ENCODE measurements at regions of chr22 and their contacts with region 1.

Region 1: DNA sequence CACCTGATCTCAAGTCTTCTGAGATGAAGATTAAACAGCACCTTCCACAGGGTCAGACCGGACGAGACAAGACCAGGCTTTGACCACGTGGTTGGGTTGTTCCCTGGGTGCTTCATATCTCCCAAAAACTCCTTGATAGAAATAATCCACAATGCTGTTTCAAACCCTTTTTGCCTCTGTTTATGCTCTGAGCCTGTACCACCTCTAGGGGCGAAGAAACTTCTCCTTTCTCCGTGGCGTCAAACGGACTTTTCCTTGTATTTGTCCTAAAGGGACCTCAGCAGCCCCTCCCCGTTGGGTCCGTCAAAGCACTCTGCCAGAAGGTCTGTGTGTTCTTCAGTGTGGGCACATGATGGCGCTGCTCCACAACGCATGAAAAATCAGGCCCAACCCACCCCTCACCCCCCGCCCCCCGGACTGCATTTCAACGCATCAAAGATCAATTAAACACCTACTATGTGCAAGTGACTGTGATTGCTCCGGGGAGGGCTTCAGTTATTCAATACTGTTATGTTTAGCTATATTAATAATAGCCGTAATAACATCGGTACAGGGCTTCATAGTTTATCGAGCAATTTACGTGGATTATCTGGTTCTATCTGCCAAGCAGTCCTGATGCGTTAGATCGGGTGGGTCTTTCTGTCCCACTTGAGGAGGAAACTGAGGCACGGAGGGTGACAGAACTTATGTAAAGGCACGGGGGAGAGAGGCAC is 17.3 kb upstream of the EIF3D start:
- DNase-seq: peak in 6 of 10 donors; percentile 43 to 61 (median 58)
- H3K4me3 ChIP-seq: peak overlapping the region in 37 of 59 donors; percentile 2 to 51 (median 31)
- H3K27ac ChIP-seq: no peak overlapping the region
- H3K27me3 ChIP-seq: peaks cover 0 to 7% (median 0%) of the 10 kb centered on the region in 45 donors
- CTCF ChIP-seq: peak in 54 of 56 donors; percentile 46 to 83 (median 70)

Region 2: DNA sequence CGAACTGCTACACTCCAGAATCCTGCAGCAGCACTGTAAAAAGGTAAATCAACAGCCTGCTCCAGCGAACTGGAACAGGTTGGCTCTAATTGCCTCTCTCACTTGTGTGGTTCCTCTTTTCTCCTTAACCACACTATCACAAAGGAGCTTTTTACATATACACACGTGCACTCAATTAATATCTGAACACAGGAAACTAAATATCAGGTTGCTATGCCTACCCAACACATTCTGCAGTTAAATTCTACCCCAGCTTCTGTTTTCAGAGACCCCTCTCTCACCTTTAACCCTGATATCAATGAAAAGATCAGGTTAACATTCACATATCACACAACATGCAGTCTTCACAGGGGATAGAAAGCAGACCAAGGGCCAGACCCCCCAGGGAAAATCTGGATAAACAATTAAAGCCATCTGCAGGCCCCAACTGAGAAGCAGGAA is 528.6 kb before region 1 on chr22:
- intact Hi-C with region 1: no loop called
- DNase-seq: no peak
- H3K4me3 ChIP-seq: no peak overlapping the region
- H3K27ac ChIP-seq: no peak overlapping the region
- H3K27me3 ChIP-seq: no peaks in the 10 kb centered on the region
- CTCF ChIP-seq: no peak

Region 3: DNA sequence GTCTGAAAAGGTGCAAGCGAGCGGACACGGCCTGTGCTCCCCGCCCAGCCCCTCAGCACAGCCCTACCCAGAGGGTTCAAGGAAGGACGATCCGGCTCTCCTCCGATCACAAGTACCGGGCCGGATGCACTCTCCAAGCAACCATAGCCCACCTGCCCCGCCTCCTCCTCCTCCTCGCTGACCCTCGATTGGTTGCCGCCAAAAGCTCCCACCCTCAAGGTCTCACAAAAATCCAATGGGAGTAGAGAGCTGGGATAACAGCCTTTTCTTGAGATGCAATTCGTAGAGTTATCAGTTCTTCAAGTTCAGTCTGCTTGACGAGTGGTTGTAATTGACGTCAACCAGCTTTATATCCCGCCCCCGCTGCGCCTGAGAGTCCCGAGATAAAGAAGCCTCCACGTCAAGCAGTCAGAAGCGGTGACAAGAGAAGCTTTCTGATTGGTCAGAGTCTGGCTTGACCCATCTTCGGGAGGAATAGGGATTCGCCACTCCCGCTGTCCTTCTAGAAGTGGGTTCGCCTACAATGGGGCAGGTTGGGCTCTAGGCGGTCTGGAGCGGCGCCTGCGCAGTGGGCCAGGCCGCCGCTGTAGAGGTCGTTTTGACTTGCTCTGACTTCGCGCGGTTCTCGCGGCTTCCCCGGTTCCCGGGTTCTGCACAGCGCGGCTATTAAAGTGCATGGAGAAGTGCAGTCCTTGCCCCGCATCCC is 229.9 kb after region 1 on chr22 and contains the start of gene IFT27:
- intact Hi-C with region 1: loop called (anchors 5 kb)
- DNase-seq: peak; percentile 94 to 100 (median 100)
- H3K4me3 ChIP-seq: peak within 1 kb of the TSS; percentile 59 to 100 (median 94)
- H3K27ac ChIP-seq: peak within 1 kb of the TSS; percentile 7 to 97 (median 89)
- H3K27me3 ChIP-seq: no peaks in the 10 kb centered on the region
- CTCF ChIP-seq: peak in 21 of 56 donors; percentile 7 to 57 (median 32)
- total RNA-seq, gene IFT27: 29.3 to 64.1 (median 43.9) TPM

Region 4: DNA sequence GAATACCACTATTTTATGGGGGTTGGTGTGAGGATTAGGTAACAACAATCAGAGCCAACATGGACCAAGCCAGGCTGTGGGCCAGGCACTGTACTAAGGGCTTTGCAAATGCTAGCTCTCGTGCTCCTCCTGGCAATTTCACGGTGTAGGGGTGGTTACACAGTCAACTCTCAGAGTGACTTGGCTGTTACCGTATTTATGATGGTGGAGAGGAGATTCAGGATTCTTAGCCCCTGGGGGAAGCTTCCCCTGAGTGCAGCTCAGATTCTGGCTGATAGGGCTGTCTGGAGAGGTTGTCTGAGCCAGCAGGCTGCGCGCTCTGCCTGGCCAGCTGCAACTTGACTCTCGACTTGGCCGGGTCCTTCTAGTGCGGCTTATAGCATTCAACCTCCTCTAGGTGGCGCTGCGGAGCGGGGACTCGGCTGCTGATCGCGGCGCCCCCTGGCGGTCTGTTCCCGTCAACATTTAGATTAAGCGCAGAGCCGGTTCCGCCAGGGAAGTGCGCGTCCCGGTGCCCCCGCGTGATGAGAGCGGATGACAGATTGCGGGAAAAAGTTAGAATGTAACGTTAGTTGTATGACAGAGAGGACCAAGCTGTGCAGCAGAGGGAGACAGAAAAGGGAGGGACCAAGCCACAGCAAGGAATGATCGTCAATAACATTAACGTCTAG is 310.0 kb after region 1 on chr22:
- intact Hi-C with region 1: loop called (anchors 5 kb)
- DNase-seq: peak; percentile 82 to 93 (median 89)
- H3K4me3 ChIP-seq: peak overlapping the region in 6 of 59 donors; percentile 2 to 30 (median 22)
- H3K27ac ChIP-seq: no peak overlapping the region
- H3K27me3 ChIP-seq: peaks cover 0 to 5% (median 0%) of the 10 kb centered on the region in 45 donors
- CTCF ChIP-seq: peak; percentile 98 to 100 (median 100)

Region 5: GRCh38 chr22:37051391-37052385 is 505.4 kb after region 1 on chr22 and contains the start of gene KCTD17:
- intact Hi-C with region 1: loop called in 1 of 2 experiments (anchors 10 kb)
- DNase-seq: peak; percentile 45 to 88 (median 72)
- H3K4me3 ChIP-seq: peak within 1 kb of the TSS; percentile 64 to 97 (median 82)
- H3K27ac ChIP-seq: peak within 1 kb of the TSS in 44 of 59 donors; percentile 0 to 85 (median 64)
- H3K27me3 ChIP-seq: no peaks in the 10 kb centered on the region
- CTCF ChIP-seq: peak in 21 of 56 donors; percentile 7 to 47 (median 28)
- total RNA-seq, gene KCTD17: 61.1 to 128 (median 98.0) TPM

Measured in dorsolateral prefrontal cortex (tissue), 120 donors.